GM10248 (cell line): ENCODE measurements at regions of chr7 and their contacts with region 1.

Region 1: GRCh38 chr7:129163875-129164544 is 19.5 kb downstream of the TSPAN33 start:
- DNase-seq: no peak
- CTCF ChIP-seq: peak; percentile 68

Region 2: DNA sequence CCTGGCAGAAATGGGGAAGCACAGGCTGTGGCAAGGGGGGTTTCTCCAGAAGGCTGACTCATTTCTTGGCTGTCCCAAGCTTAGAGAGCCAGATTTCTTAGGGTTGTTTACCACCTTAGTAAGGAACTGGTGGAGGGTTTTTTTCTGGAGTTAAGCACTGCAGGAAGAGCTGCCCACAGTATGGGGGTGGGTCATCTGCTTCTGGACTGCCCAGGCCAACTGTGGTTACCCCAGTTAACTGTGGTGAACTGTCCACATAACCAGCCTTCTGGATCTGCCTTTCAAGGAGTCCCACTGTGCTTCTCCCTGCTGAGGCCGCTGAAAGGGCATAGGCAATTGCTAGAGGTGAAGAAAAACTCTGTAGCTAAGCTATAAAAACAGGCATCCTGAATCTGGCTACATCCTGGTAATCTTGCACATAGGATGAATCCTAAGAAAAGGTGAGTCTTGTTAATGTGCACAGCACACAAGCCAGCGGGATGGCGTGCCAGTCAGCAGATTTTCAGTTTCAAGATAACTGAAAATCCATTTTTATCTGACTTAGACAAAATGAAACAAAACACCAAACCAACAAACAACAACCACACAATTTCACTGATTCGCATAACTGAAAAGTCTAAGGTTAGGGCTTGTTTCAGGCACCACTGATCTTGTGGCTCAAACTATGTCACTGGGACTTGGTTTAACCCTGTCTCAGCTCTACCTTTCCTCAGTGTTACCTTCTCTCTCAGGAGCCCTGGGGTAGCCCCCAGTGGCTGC is 41.1 kb before region 1 on chr7:
- CTCF ChIA-PET with region 1: interaction called, 12 read pairs
- POLR2A ChIA-PET with region 1: no interaction called
- DNase-seq: peak; percentile 73
- CTCF ChIP-seq: no peak

Region 3: DNA sequence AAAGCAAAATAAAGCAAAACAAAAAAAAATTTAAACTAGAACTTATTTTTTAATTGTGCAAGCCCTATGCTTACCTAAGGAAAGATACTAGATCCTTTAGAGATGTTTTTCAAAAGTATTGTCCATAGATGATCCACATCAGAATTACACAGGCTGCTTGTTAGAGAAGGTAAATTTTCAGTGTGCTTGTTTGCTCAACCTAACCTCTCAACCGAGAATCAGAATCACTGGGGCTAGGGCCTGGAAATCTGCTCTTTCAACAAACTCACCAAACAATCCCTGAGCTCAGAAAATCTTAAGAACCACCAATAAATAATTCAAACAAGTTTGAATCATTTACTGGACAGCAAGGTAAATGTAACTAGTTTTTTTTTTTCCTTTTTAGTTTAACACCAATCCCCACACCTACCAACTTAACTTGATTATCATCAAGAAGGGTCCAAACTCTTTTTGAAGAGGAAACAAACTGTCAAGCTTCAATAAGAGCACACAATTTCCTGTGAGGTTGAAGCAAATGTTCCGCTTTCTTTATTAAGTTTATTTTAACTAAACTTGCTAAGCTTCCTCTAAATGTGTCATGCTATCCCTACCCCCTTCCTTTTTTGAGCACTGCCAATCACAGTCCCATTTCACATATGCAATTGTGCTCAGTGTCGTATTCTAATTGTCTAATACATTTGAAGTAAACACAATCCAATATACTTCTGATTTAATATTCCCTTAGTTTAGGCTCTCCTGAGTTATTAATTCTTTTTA is 26.9 kb before region 1 on chr7:
- CTCF ChIA-PET with region 1: interaction called, 10 read pairs
- POLR2A ChIA-PET with region 1: interaction called, 4 read pairs
- DNase-seq: peak; percentile 49
- CTCF ChIP-seq: no peak

Region 4: DNA sequence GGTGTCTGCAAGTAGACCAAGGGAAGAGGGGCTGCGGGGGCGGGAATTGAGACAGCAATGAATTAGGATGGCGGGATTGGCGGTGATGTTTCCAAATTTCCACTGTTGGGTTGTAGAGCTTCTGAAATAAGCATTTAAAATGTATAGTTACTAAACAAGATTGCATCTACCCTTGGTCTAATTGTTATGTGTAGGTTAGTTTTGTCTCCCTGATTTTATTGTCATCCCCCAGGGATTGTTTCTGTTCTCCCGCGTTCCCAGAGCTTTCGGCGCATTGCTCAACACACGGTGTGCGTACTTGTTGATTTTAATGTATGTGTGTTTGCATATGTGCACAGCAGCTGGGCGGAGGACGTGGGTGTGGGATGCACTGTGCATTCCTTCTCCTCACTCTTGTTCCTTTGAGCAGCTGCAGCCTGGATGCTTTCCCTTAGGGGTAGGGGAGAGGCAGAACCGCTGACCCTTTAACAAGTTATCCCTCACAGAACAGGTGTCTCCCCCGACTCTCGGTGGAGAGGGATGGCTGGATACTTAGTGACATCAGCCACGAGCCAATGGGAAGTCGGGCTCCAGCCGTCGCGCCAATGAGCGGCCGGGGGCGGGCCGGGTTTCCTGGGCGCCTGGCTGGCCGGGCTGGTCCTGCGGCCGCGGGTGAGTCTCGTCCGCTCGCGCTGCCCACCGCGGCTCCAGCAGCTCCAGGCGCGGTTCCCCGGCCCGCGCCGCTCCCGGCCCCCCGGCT is 19.7 kb before region 1 on chr7 and contains the start of gene TSPAN33:
- CTCF ChIA-PET with region 1: interaction called, 220 read pairs
- POLR2A ChIA-PET with region 1: interaction called, 4 read pairs
- DNase-seq: peak; percentile 92
- CTCF ChIP-seq: no peak

Region 5: DNA sequence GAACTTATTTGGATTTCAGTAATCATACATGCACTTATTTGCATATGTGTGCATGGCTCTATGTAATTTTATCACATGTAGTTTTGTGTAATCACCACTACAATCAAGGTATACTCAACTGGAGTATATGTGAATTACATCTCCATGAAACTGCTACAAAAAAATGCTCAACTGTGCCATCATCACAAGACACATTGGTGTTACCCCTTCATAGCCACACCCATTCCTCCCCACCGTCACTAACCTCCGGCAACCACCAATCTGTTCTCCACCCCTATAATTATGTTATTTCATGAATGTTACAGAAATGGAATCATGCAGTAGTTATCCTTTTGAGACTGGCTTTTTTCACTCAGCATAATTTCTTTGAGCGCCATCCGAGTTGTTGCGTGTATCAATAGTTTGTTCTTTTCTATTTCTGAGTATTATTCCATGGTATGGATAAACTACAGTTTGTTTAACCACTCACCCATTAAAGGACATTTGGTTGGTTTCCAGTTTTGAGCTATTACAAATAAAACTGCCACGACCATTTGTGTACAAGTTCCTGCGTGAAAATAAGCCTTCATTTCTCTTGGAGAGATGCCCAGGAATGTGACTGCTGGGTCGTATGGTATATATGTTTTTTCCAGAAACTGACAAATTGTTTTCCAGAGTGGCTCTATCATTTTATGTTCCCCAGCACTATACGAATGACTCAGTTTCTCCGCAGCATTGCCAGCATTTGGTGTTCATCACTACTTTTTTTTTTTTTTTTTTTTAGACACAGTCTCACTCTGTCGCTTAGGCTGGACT is 13.1 kb after region 1 on chr7:
- CTCF ChIA-PET with region 1: interaction called, 220 read pairs
- POLR2A ChIA-PET with region 1: no interaction called
- DNase-seq: no peak
- CTCF ChIP-seq: no peak

Region 6: DNA sequence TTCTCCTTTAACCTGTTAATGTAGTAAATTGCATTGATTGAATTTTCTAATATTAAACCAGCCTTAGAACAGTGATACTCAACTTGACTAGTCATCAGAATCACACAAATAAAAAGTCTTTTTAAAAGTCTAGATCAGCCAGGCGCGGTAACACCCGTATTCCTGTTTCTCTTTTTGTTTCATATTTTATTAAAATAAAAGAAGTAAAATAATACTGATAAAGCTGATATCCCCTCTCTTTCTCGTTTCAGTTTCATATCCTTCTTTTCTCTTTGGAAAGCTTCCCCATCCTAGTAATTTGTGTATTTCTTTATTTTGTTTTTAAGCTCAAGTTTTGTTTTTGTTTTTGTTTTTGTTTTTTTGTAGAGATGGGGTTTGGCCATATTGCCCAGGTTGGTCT is 33.8 kb after region 1 on chr7:
- CTCF ChIA-PET with region 1: interaction called, 11 read pairs
- POLR2A ChIA-PET with region 1: no interaction called
- DNase-seq: no peak
- CTCF ChIP-seq: no peak

Region 7: DNA sequence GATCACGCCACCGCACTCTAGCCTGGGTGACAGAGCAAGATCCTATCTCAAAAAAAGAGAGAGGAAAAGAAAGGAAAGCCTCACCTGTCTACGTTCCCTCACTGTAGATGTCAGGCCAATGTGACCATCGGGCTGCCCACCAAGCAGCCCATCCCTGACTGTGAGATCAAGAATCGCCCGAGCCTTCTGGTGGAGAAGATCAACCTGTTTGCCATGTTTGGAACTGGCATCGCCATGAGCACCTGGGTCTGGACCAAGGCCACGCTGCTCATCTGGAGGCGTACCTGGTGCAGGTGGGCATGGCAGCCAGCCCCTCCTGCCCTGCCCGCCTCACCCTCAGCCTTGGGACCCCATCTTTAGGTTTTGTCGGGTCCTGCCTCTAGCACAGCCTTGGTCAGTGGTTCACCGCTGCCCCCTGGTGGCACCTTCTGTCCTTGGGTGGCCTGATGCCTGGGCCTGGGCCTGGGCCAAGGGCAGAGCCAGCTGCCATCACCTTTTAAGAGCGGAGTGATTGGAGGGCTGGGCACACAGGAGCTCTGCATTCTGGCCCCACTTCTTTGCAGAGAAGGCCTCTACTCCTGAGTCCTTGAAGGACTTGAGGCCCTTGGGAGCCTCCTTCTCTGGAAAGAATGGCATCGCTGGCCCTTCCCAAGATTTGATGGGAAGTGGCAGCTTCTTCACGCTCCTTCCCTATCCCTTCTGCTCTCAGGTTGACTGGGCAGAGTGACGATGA is 46.4 kb after region 1 on chr7:
- CTCF ChIA-PET with region 1: interaction called, 46 read pairs
- POLR2A ChIA-PET with region 1: no interaction called
- DNase-seq: peak; percentile 88
- CTCF ChIP-seq: peak; percentile 96